IMR-90 (cell line): ENCODE measurements at regions of chr5 and their contacts with region 1.

Region 1: DNA sequence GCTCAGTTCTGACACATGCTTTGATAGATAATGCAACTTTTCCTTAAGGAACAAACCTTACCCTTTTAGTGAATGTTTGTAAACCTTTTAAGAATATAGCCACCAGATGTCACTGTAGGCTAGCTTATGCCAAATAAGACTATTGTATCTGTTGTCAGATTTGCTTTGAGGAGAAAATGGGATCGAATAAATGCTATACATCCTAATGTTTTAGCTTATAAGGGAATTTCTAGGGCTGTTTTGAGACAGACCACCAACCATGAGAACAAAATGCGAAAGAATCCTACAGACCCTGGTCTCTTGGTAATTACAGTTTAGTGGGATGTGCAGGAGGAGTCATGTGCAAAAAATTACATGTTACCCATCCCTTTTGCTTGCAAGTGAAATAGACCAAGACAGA is 127.6 kb upstream of the NMUR2 start:
- DNase-seq: peak; percentile 56
- ATAC-seq: peak; percentile 69
- H3K4me3 ChIP-seq: no peak overlapping the region
- H3K27ac ChIP-seq: no peak overlapping the region
- H3K4me1 ChIP-seq: no peaks in the 10 kb centered on the region
- H3K27me3 ChIP-seq: no peaks in the 10 kb centered on the region
- CTCF ChIP-seq: peak; percentile 65
- POLR2A ChIP-seq: no peak
- RAD21 ChIP-seq: peak; percentile 78

Region 2: DNA sequence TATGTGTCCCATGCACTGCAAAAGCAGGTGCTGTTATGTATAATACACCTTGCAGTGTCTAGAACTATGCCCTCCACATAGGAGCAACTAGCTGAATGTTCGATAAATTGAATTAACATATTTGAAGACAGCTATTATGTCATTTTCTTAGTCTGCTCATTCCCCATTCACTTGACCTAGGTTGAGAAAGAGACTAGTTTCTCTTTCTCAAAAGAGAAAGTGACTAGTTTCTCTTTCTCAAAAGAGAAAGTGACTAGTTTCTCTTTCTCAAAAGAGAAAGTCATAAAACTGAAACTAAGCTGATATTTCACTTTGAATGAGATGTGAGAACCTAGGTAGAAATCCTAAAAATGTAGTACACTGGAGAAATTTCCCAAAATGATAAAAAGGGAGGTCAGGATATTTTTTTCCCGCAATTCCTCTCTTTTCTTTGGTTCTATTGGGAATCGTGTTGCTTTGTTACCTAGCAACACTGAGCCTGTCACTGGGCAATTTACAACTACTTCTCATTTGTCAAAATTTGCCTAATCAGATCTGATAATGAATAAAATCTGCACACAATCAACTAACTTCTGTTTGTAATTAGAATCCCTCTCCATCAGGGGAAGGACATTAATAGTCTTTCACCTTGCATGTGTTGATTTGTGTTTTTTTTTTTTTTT is 825.7 kb after region 1 on chr5:
- CTCF ChIA-PET with region 1: no interaction called
- POLR2A ChIA-PET with region 1: no interaction called
- dilution Hi-C with region 1: no loop called
- in situ Hi-C with region 1: no loop called
- intact Hi-C with region 1: no loop called
- DNase-seq: no peak
- ATAC-seq: no peak
- H3K4me3 ChIP-seq: no peak overlapping the region
- H3K27ac ChIP-seq: no peak overlapping the region
- H3K4me1 ChIP-seq: no peaks in the 10 kb centered on the region
- H3K27me3 ChIP-seq: no peaks in the 10 kb centered on the region
- CTCF ChIP-seq: no peak
- POLR2A ChIP-seq: no peak
- RAD21 ChIP-seq: no peak

Region 3: DNA sequence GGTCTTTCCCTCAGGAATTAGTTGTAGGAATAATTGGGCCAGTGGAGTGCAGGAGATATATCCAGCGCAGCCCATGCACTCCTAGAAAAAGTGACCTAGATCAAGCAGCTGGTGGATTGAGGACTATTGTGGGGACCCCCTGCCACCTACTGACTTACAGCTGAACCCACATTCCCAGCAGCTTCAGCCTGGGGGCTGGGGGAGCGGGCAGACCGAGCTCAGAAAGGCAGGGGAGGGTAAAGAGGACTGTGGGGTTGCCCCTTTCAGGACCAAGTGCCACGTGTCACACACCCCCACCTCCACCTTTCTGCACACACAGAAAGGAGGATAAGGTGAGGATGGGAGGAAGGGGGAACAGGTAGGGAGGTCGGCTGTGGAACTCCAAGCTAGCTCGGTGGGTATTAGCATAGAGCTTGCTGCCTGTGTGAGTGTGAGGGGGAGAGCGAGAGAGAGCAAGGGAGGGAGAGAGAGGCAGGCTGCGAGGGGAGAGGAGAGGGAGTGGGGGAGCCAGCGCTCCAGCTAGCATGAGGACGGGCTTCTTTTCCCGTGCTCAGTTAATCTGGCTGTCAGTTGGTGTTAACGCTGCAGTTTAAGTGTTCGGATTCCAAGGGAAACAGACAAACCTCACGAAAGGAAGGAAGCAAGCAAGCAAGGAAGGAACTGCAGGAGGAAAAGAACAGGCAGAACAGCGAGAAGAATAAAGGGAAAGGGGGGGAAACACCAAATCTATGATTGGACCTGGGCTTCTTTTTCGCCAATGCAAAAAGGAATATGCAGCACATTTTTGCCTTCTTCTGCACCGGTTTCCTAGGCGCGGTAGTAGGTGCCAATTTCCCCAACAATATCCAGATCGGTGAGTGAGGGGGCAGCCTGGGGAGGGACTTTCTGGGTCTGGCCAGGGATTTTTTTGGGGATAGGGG is 957.7 kb after region 1 on chr5 and contains the start of gene GRIA1:
- CTCF ChIA-PET with region 1: interaction called, 4 read pairs
- POLR2A ChIA-PET with region 1: no interaction called
- dilution Hi-C with region 1: no loop called
- in situ Hi-C with region 1: no loop called
- intact Hi-C with region 1: loop called (anchors 5 kb)
- DNase-seq: peak; percentile 9
- ATAC-seq: peak; percentile 76
- H3K4me3 ChIP-seq: peak within 1 kb of the TSS; percentile 24
- H3K27ac ChIP-seq: no peak within 1 kb of the TSS
- H3K4me1 ChIP-seq: no peaks in the 10 kb centered on the region; the same call in 1 of the 2 replicates
- H3K27me3 ChIP-seq: no peaks in the 10 kb centered on the region; the same call in 1 of the 2 replicates
- CTCF ChIP-seq: no peak
- POLR2A ChIP-seq: no peak
- RAD21 ChIP-seq: no peak
- total RNA-seq, gene GRIA1: 1.3 and 1.4 TPM in 2 replicates

Region 4: GRCh38 chr5:153756540-153756939 is 1223.8 kb after region 1 on chr5:
- CTCF ChIA-PET with region 1: no interaction called
- POLR2A ChIA-PET with region 1: no interaction called
- dilution Hi-C with region 1: no loop called
- in situ Hi-C with region 1: no loop called
- intact Hi-C with region 1: loop called (anchors 10 kb)
- DNase-seq: peak; percentile 6
- ATAC-seq: peak; percentile 21; the same call in 1 of the 2 replicates
- H3K4me3 ChIP-seq: no peak overlapping the region
- H3K27ac ChIP-seq: no peak overlapping the region
- H3K4me1 ChIP-seq: no peaks in the 10 kb centered on the region
- H3K27me3 ChIP-seq: no peaks in the 10 kb centered on the region
- CTCF ChIP-seq: peak; percentile 32
- POLR2A ChIP-seq: no peak
- RAD21 ChIP-seq: peak; percentile 38

Region 5: DNA sequence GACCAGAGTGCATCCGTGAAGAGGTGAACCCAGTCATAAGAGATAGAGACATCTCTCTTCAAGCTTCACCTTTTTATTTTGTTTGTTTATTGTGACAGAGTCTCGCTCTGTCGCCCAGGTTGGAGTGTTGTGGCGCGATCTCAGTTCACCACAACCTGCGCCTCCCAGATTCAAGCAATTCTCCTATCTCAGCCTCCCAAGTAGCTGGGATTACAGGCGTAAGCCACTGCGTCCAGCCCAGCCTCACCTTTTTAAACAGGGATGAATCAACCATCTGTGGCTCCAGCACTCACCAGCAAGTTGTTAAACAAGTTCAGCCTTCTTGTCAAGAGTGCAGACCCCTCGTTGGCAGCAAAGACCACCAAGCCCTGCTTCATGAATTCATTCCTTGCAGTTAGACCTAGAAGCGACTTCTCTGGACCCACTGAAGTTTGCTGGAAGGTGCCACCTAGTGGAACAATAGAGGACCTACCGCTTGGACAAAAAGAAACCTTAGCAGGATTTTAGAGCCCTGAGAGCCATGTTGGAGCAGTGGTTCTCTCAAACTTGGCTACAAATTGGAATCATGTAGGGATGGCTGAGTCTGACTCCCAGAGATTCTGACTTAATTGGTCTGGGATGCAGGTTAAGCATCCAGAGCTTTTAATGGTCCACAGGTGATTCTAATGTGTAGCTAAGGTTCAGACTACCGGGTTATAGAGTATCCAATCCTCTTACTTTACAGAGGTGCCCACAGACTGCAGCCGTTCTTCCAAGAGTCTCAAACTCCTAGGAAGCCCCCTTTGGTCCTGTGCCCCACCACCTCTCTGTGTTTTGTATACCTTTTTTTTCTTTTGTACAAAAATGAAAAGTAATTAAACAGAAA is 1647.4 kb after region 1 on chr5:
- CTCF ChIA-PET with region 1: no interaction called
- POLR2A ChIA-PET with region 1: no interaction called
- dilution Hi-C with region 1: no loop called
- in situ Hi-C with region 1: no loop called
- intact Hi-C with region 1: loop called (anchors 2 kb)
- DNase-seq: peak; percentile 67
- ATAC-seq: peak; percentile 97
- H3K4me3 ChIP-seq: no peak overlapping the region
- H3K27ac ChIP-seq: no peak overlapping the region
- H3K4me1 ChIP-seq: no peaks in the 10 kb centered on the region
- H3K27me3 ChIP-seq: peaks cover 23% of the 10 kb centered on the region
- CTCF ChIP-seq: peak; percentile 79
- POLR2A ChIP-seq: no peak
- RAD21 ChIP-seq: peak; percentile 64